ENCODE measurements at regions of chr2 and their contacts with region 1.

Region 1: DNA sequence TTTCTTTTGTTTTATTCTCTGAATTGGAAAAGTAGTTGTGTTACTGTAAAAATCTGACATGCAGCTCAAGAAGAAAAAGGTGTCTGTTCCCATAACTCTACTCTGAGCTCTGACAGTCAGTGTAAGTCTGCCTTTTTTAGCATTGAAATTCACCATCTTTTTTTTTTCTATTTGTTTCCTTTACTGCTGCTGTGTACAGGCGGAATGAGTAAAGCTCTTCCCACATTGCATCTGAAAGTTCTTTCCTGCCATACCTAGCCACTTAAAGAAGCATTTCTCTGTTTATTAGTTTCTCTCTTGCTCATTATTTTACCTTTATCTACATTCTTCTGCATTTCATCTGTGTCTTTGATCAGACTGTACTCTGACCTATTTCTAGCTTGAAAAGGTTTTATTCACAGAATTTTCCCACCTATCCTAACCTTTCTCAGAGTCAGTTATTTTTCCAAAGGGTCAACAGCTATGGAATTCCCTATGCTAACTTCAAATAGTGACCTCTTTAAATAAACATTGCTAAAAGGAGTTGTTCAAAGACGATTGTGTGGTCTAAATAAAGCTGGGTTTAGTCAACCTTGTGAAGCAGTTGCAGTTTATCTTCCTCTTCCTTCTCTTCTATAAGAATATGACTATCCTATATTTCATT is 1303.1 kb upstream of the ZEB2 start:
- DNase-seq: peak; percentile 98
- ATAC-seq: peak; percentile 96
- H3K4me3 ChIP-seq: peak overlapping the region in 2 of 3 experiments; percentile 11 to 13; a peak in 2 of 6 replicates
- H3K27ac ChIP-seq: peak overlapping the region; percentile 89
- H3K4me1 ChIP-seq: peaks cover 45% of the 10 kb centered on the region
- H3K27me3 ChIP-seq: no peaks in the 10 kb centered on the region
- CTCF ChIP-seq: no peak
- EP300 ChIP-seq: peak; percentile 82 to 99
- POLR2A ChIP-seq: no peak
- RAD21 ChIP-seq: 0 out of 2 replicates have a peak, but pooled peaks have one; percentile 31

Region 2: GRCh38 chr2:145141981-145142380 is 681.0 kb before region 1 on chr2:
- CTCF ChIA-PET with region 1: no interaction called
- POLR2A ChIA-PET with region 1: no interaction called
- in situ Hi-C with region 1: no loop called
- intact Hi-C with region 1: no loop called
- DNase-seq: no peak
- ATAC-seq: no peak
- H3K4me3 ChIP-seq: no peak overlapping the region
- H3K27ac ChIP-seq: no peak overlapping the region
- H3K4me1 ChIP-seq: no peaks in the 10 kb centered on the region
- H3K27me3 ChIP-seq: no peaks in the 10 kb centered on the region
- CTCF ChIP-seq: no peak
- EP300 ChIP-seq: no peak
- POLR2A ChIP-seq: no peak
- RAD21 ChIP-seq: no peak

Region 3: GRCh38 chr2:145760781-145761649 is 62.0 kb before region 1 on chr2:
- CTCF ChIA-PET with region 1: no interaction called
- POLR2A ChIA-PET with region 1: interaction called, 45 read pairs
- in situ Hi-C with region 1: loop called (anchors 5 kb)
- intact Hi-C with region 1: loop called (anchors 1 kb)
- DNase-seq: peak; percentile 96
- ATAC-seq: peak; percentile 92
- H3K4me3 ChIP-seq: peak overlapping the region in 2 of 3 experiments; percentile 1 to 34; a peak in 1 of 6 replicates
- H3K27ac ChIP-seq: peak overlapping the region; percentile 93
- H3K4me1 ChIP-seq: peaks cover 78% of the 10 kb centered on the region
- H3K27me3 ChIP-seq: no peaks in the 10 kb centered on the region
- CTCF ChIP-seq: no peak
- EP300 ChIP-seq: peak; percentile 99 to 100
- POLR2A ChIP-seq: no peak
- RAD21 ChIP-seq: peak; percentile 55; the same call in 1 of the 2 replicates

Region 4: DNA sequence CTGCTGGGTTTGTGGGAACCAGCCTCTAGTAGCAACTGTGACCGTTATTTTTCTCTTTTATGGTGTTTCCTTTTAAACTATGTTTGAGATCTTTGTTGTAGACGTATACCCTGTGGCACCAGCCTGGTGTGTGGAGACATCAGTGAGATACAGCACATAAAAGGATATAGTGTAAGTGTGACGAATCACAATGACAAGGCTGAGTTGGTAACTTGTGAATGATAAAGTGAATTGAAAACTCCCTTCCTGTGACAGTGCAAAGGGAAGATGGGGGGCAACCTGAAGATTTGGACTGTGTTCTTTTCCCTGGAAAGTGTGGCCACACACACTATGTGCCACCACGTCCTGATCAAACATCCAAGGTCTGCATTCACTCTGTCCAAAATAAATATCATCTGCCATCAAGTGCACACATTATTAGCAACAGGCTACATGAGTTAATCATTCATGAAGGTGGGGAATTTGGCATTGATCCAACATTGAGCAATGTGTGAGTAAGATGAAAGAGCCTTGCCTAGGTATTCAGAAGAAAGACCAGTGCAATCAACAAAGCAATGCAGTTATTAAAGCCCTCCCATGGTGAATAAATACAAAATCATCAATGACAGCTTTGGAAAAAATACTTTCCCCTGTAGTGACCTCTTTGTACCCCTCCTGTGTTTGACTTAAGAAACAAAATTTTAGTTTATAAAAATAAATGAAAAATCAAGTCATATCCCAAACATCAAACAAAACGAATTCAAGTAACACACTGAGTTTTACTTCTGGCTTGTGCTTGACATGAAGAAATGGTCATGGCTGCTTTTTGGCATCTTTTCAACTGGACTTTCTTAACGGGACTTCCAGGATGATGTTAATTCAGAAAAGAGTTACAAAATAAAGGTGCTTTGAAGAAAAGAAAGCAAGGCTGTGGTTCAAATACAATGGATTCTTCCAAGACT is 22.6 kb before region 1 on chr2:
- CTCF ChIA-PET with region 1: no interaction called
- POLR2A ChIA-PET with region 1: interaction called, 11 read pairs
- in situ Hi-C with region 1: no loop called
- intact Hi-C with region 1: loop called (anchors 1 kb)
- DNase-seq: peak; percentile 100
- ATAC-seq: peak; percentile 99
- H3K4me3 ChIP-seq: peak overlapping the region in 1 of 3 experiments; percentile 10; a peak in 1 of 6 replicates
- H3K27ac ChIP-seq: peak overlapping the region; percentile 89
- H3K4me1 ChIP-seq: peaks cover 52% of the 10 kb centered on the region
- H3K27me3 ChIP-seq: no peaks in the 10 kb centered on the region
- CTCF ChIP-seq: peak; percentile 25; the same call in 1 of the 2 replicates
- EP300 ChIP-seq: peak in 1 of 2 experiments; percentile 100; a peak in 3 of 4 replicates
- POLR2A ChIP-seq: no peak
- RAD21 ChIP-seq: no peak

Region 5: GRCh38 chr2:145845207-145845894 is 22.3 kb after region 1 on chr2:
- CTCF ChIA-PET with region 1: no interaction called
- POLR2A ChIA-PET with region 1: interaction called, 4 read pairs
- in situ Hi-C with region 1: no loop called
- intact Hi-C with region 1: loop called (anchors 1 kb)
- DNase-seq: peak; percentile 41
- ATAC-seq: peak; percentile 74
- H3K4me3 ChIP-seq: no peak overlapping the region; a peak in 1 of 6 replicates
- H3K27ac ChIP-seq: peak overlapping the region; percentile 17
- H3K4me1 ChIP-seq: peaks cover 42% of the 10 kb centered on the region
- H3K27me3 ChIP-seq: no peaks in the 10 kb centered on the region
- CTCF ChIP-seq: no peak
- EP300 ChIP-seq: peak in 1 of 2 experiments; percentile 11; a peak in 1 of 4 replicates
- POLR2A ChIP-seq: no peak
- RAD21 ChIP-seq: no peak

Region 6: GRCh38 chr2:145961846-145962245 is 138.8 kb after region 1 on chr2:
- CTCF ChIA-PET with region 1: no interaction called
- POLR2A ChIA-PET with region 1: no interaction called
- in situ Hi-C with region 1: no loop called
- intact Hi-C with region 1: no loop called
- DNase-seq: no peak
- ATAC-seq: no peak
- H3K4me3 ChIP-seq: no peak overlapping the region
- H3K27ac ChIP-seq: no peak overlapping the region
- H3K4me1 ChIP-seq: no peaks in the 10 kb centered on the region
- H3K27me3 ChIP-seq: no peaks in the 10 kb centered on the region
- CTCF ChIP-seq: no peak
- EP300 ChIP-seq: no peak
- POLR2A ChIP-seq: no peak
- RAD21 ChIP-seq: no peak

Measured in HepG2 (cell line).